Caco-2 (cell line): ENCODE measurements at regions of chr4 and their contacts with region 1.

Region 1: DNA sequence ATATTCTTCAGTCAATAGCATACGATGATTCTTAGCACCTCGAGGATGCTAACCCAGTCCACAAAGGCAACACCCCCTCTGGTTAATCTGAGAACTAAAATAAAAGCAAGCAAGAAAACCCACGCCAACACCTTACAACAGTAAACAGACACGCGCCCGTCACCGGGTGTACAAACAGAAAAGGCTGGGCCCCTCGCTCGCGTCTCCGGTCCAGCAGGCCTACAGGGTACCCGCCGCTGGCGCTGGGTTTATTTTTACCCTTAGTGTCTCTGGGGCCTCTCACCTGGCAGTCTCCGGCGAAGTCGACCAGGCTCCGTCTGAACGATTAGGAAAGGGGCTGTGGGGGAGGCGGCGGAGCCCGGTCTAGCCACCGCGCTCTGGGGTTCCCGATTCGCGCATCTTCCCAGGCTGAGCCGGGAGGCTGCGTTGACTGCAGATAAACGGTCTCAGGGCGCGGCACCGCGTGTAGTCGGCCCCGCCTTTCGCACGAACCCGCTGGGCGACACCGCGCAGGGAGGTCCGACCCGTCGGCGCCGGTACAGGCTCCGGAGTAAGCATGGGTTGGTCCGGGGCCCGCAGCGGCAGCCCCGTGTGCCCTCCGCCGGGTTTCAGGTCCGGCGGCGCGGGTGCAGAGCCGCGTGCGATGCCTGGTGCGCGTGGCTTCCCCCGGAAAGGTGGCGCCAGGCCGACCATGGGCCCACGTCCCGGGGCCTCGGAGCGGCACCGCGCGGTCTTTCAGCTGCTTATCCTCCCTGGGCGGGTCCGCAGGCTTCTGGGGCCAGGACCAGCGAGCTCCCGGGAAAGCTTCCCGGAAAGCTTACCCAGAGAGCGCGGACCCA is 441 bp downstream of the SLC9B2 start:
- DNase-seq: peak; percentile 48 to 67
- H3K4me3 ChIP-seq: peak overlapping the region; percentile 88
- H3K4me3 Mint-ChIP-seq: peak overlapping the region; percentile 77
- H3K27ac Mint-ChIP-seq: peak overlapping the region; percentile 58
- H3K4me1 ChIP-seq: peaks cover 15% of the 10 kb centered on the region; the same call in 1 of the 2 replicates
- H3K4me1 Mint-ChIP-seq: peaks cover 6% of the 10 kb centered on the region
- H3K27me3 ChIP-seq: no peaks in the 10 kb centered on the region
- H3K27me3 Mint-ChIP-seq: no peaks in the 10 kb centered on the region
- CTCF ChIP-seq: no peak

Region 2: GRCh38 chr4:103019308-103020124 is 56.6 kb before region 1 on chr4 and contains the start of gene SLC9B1:
- CTCF ChIA-PET with region 1: no interaction called
- POLR2A ChIA-PET with region 1: no interaction called
- intact Hi-C with region 1: loop called (anchors 2 kb)
- DNase-seq: peak; percentile 95 to 97
- H3K4me3 ChIP-seq: peak within 1 kb of the TSS; percentile 49
- H3K4me3 Mint-ChIP-seq: peak within 1 kb of the TSS; percentile 99
- H3K27ac Mint-ChIP-seq: peak within 1 kb of the TSS; percentile 99
- H3K4me1 ChIP-seq: no peaks in the 10 kb centered on the region
- H3K4me1 Mint-ChIP-seq: peaks cover 8% of the 10 kb centered on the region
- H3K27me3 ChIP-seq: no peaks in the 10 kb centered on the region
- H3K27me3 Mint-ChIP-seq: no peaks in the 10 kb centered on the region
- CTCF ChIP-seq: no peak
- total RNA-seq, gene SLC9B1: 1.7 TPM in 1 of 2 replicates, not detected in the other

Region 3: GRCh38 chr4:103032574-103032973 is 43.5 kb before region 1 on chr4:
- CTCF ChIA-PET with region 1: no interaction called
- POLR2A ChIA-PET with region 1: interaction called, 13 read pairs
- intact Hi-C with region 1: no loop called
- DNase-seq: peak; percentile 59 to 64
- H3K4me3 ChIP-seq: no peak overlapping the region
- H3K4me3 Mint-ChIP-seq: no peak overlapping the region
- H3K27ac Mint-ChIP-seq: no peak overlapping the region
- H3K4me1 ChIP-seq: no peaks in the 10 kb centered on the region
- H3K4me1 Mint-ChIP-seq: no peaks in the 10 kb centered on the region
- H3K27me3 ChIP-seq: no peaks in the 10 kb centered on the region
- H3K27me3 Mint-ChIP-seq: no peaks in the 10 kb centered on the region
- CTCF ChIP-seq: peak; percentile 47 to 69

Region 4: DNA sequence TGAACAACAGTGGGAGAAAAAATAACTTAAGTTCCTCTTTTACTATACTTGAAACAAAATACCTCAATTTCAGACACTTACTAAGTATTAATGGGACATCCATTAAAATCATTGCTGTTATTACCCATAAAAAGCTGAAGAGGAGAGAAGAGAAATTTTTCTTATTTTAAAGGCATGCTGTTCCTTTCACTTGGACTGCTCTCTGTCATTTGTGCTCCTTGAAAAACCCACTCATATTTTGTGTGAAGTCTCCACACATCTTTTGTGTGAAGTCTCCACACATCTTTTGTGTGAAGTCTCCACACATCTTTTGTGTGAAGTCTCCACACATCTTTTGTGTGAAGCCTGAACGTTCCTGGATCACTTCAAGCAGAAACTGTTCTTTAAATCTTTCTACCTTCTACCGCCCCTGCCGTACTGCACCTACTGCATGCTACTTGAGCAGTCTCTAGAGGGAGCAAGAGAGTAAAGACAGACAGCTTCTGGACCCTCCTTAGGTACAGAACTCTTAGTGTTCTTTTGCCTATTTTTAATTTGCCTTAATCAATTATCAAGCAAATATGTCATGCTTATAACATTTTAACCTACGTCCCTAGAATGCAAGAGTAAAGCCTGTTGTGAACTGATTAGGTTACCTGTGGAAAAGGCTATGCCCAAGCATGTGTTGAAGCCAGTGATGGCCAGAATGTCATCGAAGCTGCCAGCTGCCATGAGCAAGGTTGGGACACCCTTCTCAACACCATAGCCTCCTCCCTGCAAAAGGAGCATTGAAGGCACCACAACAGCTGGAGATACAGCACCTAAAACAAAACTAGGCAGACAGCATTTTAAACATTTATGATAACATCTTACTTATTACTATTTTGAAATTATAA is 29.5 kb before region 1 on chr4:
- CTCF ChIA-PET with region 1: no interaction called
- POLR2A ChIA-PET with region 1: no interaction called
- intact Hi-C with region 1: loop called (anchors 1 kb)
- DNase-seq: peak; percentile 43 to 57
- H3K4me3 ChIP-seq: no peak overlapping the region
- H3K4me3 Mint-ChIP-seq: no peak overlapping the region
- H3K27ac Mint-ChIP-seq: no peak overlapping the region
- H3K4me1 ChIP-seq: no peaks in the 10 kb centered on the region
- H3K4me1 Mint-ChIP-seq: no peaks in the 10 kb centered on the region
- H3K27me3 ChIP-seq: no peaks in the 10 kb centered on the region
- H3K27me3 Mint-ChIP-seq: no peaks in the 10 kb centered on the region
- CTCF ChIP-seq: peak; percentile 69 to 82